ENCODE measurements at regions of chr11 and their contacts with region 1.

Region 1: GRCh38 chr11:18731949-18732821 is 6.2 kb upstream of the IGSF22 start:
- DNase-seq: peak; percentile 40
- H3K4me3 Mint-ChIP-seq: no peak overlapping the region
- H3K27ac Mint-ChIP-seq: no peak overlapping the region
- H3K4me1 Mint-ChIP-seq: peaks cover 2% of the 10 kb centered on the region
- H3K27me3 Mint-ChIP-seq: peaks cover 10% of the 10 kb centered on the region

Region 2: GRCh38 chr11:18243783-18244362 is 488.3 kb before region 1 on chr11:
- intact Hi-C with region 1: loop called (anchors 10 kb)
- DNase-seq: peak; percentile 63
- H3K4me3 Mint-ChIP-seq: no peak overlapping the region
- H3K27ac Mint-ChIP-seq: peak overlapping the region; percentile 54
- H3K4me1 Mint-ChIP-seq: peaks cover 25% of the 10 kb centered on the region
- H3K27me3 Mint-ChIP-seq: peaks cover 34% of the 10 kb centered on the region

Region 3: GRCh38 chr11:18265949-18266348 is 466.2 kb before region 1 on chr11 and contains the start of gene SAA1:
- intact Hi-C with region 1: no loop called
- DNase-seq: no peak
- H3K4me3 Mint-ChIP-seq: no peak within 1 kb of the TSS
- H3K27ac Mint-ChIP-seq: no peak within 1 kb of the TSS
- H3K4me1 Mint-ChIP-seq: peaks cover 11% of the 10 kb centered on the region
- H3K27me3 Mint-ChIP-seq: peaks cover 2% of the 10 kb centered on the region
- total RNA-seq, gene SAA1: not detected in 2 replicates

Region 4: GRCh38 chr11:18364495-18365073 is 367.6 kb before region 1 on chr11:
- intact Hi-C with region 1: no loop called
- DNase-seq: no peak
- H3K4me3 Mint-ChIP-seq: no peak overlapping the region
- H3K27ac Mint-ChIP-seq: no peak overlapping the region
- H3K4me1 Mint-ChIP-seq: peaks cover 16% of the 10 kb centered on the region
- H3K27me3 Mint-ChIP-seq: no peaks in the 10 kb centered on the region

Region 5: GRCh38 chr11:18588297-18589252 is 143.6 kb before region 1 on chr11 and contains the start of gene UEVLD:
- intact Hi-C with region 1: no loop called
- DNase-seq: peak; percentile 62
- H3K4me3 Mint-ChIP-seq: no peak within 1 kb of the TSS
- H3K27ac Mint-ChIP-seq: no peak within 1 kb of the TSS
- H3K4me1 Mint-ChIP-seq: peaks cover 9% of the 10 kb centered on the region
- H3K27me3 Mint-ChIP-seq: no peaks in the 10 kb centered on the region
- total RNA-seq, gene UEVLD: 26.4 and 32.7 TPM in 2 replicates

Region 6: DNA sequence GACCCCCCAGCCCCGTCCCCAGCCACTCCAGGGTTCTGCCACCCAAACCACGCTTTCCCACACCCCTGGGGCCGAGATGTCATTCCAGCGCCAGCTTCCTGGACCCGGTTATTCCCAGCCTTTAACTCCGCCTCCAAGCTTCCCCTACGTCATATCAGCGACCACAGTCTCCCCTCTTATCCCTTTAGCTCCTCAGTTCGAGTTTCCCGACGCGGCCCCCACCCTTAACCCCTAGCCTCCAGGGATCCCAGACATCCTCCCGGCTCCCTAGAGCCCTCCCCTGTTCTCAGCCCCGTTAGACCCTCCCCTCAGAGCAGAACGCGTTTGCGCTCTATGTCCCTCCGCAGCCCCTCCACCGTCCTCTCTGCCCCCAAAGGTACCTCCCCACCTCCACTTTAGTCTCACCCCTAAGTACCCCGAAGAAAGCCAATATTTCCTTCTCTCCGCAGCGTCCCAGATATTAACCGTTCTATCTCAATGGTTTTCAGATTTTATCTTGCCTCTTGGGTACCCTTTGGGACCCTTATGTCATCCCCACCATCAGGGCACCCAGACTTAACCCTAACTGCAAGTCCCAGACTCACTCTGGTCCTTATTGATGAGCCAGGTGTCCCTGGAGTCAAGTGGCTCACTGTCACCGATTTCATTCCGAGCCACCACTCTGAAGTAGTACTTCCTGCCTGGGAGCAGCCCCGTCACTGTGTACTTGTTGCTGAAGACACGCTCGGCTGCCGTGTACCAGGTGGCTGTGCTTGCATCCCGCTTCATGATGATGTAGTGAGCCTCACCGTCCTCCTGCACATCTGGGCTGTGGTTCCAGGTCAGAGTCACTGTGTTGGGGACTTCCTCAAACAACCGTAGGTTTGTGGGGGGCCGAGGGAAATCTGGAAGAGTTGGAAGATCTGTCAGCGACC is 25.6 kb before region 1 on chr11:
- intact Hi-C with region 1: no loop called
- DNase-seq: peak; percentile 20
- H3K4me3 Mint-ChIP-seq: peak overlapping the region; percentile 85
- H3K27ac Mint-ChIP-seq: peak overlapping the region; percentile 60
- H3K4me1 Mint-ChIP-seq: peaks cover 16% of the 10 kb centered on the region
- H3K27me3 Mint-ChIP-seq: peaks cover 58% of the 10 kb centered on the region

Region 7: DNA sequence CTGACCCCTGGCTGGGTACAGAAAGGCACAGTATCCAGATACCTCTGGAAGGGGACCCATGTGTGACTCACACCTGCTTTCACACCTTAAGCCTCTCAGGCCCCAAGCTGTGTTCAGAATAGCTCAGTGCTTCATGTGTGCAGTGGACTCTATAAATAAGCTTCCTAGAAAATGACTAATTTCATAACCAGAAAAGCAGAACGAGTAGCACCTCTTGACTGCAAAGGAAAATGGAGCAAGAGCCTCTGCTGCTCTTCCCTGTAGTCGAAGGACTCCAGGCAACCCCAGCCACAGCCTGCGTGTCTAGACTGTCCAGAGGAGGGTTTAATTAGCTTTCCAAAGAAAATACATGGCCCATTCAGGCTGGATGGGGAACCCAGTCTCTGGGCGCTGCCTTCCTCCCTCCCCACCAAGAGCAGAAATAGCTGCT is 36.3 kb after region 1 on chr11:
- intact Hi-C with region 1: loop called (anchors 2 kb)
- DNase-seq: no peak
- H3K4me3 Mint-ChIP-seq: no peak overlapping the region
- H3K27ac Mint-ChIP-seq: no peak overlapping the region
- H3K4me1 Mint-ChIP-seq: peaks cover 24% of the 10 kb centered on the region
- H3K27me3 Mint-ChIP-seq: no peaks in the 10 kb centered on the region

Measured in activated T-helper 2 cell treated with anti-CD3 and anti-CD28 coated beads, Interferon-gamma antibody, Interleukin-2, Interleukin-4, amounts not matched to agents 10 μg/mL and 5 μg/mL and 100 μg/mL, durations not matched to agents 14 hours and 24 hours and 36 hours (primary cell).